ENCODE measurements at regions of chr5 and their contacts with region 1.

Region 1: DNA sequence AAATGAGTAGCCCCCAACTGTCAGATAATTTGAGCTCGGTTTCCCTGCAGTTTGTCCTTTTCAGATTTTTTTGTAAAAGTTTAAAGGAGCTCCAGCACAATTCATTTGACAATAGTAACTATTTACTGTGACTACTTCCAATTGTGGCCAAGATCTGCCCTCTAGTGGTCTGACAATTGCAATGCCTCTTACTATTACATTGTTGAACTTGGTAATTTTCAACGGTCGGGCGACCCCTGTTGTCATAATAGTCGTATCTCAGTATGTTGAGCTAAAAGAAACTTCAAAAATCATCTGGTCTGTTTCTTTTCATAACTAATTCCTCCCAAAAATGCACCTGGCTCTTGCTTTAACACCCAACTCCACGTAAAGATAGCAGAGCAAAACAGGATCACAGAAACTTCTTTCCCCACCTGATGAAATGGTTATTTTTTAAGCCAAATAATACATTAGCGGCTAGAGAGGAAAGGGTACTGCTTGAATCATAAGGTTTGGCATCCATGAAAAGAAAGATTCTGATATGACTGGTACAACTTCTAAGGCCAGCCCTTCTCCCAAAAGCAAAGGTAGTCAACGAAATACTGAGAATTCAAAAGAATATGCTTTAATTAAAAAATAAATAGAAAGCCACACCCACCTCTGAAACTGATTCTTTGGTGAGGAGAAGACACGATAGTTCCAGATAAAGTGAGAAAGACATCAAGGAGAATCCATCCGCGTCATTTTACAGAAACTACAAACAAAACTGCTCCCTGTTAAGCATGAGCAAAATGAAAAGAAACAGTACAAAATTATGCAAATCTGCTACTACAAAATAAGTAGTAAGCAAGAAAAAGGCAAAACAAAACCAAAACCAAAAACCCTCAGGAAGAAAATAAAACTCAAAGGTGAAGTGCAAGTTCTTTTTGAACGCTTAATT is 76.9 kb upstream of the HTR4 start:
- DNase-seq: peak in 2 of 3 donors; percentile 32 to 90
- ATAC-seq: peak; percentile 96
- H3K4me3 ChIP-seq: no peak overlapping the region
- H3K4me1 ChIP-seq: no peaks in the 10 kb centered on the region
- CTCF ChIP-seq: peak; percentile 76

Region 2: GRCh38 chr5:148179234-148179824 is 551.9 kb before region 1 on chr5:
- intact Hi-C with region 1: loop called (anchors 5 kb)
- DNase-seq: peak in 1 of 3 donors; percentile 30
- ATAC-seq: peak; percentile 71
- H3K4me3 ChIP-seq: no peak overlapping the region
- H3K4me1 ChIP-seq: no peaks in the 10 kb centered on the region
- CTCF ChIP-seq: no peak

Region 3: DNA sequence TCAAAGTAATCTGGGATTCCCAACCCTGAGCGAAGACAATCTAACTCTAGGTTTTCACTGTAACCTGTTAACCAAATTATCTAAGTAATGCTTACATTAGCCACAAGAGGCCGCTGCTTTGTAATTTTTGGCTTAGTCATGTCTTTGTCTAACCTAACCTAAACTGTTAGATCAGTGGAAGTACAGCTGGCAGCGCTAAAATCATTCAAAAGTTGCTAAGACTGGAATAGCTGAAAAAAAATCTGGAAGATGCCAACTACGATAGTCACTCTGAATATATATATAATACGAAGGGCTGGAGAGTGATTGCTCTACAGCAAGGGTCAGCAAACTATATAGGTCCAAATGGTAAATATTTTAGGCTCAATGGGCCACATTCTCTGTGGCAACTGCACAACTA is 287.2 kb before region 1 on chr5:
- intact Hi-C with region 1: loop called (anchors 2 to 5 kb)
- DNase-seq: peak in 1 of 3 donors; percentile 80
- ATAC-seq: peak; percentile 83
- H3K4me3 ChIP-seq: no peak overlapping the region
- H3K4me1 ChIP-seq: no peaks in the 10 kb centered on the region
- CTCF ChIP-seq: peak; percentile 9

Region 4: GRCh38 chr5:148998174-148998797 is 267.1 kb after region 1 on chr5:
- intact Hi-C with region 1: loop called in 1 of 2 experiments (anchors 10 kb)
- DNase-seq: peak in 1 of 3 donors; percentile 80
- ATAC-seq: peak; percentile 66
- H3K4me3 ChIP-seq: no peak overlapping the region
- H3K4me1 ChIP-seq: peaks cover 5% of the 10 kb centered on the region
- CTCF ChIP-seq: peak; percentile 45

Region 5: DNA sequence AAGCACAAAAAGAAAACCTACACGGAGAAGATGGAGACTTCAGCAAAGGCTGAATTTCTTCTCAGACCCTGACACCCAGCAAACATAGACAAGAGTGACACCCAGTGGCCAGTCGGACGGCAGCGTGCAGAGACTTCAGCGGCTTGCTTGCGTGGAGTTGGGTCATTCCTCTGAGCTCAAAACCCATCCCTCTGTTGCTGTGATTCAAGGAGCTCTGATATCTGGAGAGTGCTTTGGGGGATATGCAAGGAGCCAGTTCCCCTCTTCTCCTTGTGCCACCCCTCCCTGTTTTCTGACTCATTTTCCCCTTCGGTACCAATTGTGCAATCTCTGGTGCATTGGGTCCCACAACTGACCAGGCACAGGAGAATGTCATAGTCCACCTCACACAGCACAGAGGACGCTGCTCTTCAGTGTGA is 304.2 kb after region 1 on chr5:
- intact Hi-C with region 1: loop called (anchors 10 kb)
- DNase-seq: peak; percentile 62 to 85 (median 79)
- ATAC-seq: peak; percentile 87
- H3K4me3 ChIP-seq: no peak overlapping the region
- H3K4me1 ChIP-seq: no peaks in the 10 kb centered on the region
- CTCF ChIP-seq: peak; percentile 45

Region 6: DNA sequence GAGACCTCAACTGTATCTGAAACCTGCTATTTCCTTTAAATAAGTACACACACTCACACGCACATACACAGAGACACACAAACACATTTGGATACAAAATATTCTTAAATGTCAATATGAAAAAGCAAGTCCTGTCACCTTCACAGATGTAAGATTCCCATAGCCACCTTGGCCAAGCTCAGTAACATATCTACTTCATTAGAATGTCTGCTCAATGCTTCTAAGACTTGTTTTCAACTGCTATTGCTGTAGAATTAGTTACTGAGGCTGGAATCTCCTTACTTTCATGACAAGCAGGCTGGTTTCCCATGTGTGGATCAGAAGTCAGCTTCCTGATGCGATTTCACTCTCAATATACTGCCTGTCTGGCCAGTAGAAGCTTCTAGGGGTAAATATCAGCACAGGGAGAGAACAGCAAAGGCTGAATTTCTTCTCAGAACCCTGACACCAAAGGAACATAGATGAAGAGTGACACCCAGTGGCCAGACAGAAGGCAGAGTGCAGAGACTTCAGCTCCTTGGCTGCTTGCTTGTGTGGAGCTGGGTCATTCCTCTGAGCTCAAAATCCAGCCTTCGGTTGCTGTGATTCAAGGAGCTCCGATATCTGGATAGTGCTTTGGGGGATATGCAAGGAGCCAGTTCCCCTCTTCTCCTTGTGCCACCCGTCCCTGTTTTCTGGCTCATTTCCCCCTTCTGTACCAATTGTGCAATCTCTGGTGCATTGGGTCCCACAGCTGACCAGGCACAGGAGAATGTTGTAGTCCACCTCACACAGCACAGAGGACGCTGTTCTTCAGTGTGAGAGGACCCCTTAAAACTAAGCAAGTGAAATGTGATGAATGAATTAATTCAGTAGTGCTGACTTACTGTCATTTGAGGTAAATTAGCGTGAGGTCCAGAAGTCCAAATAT is 383.5 kb after region 1 on chr5:
- intact Hi-C with region 1: loop called in 1 of 2 experiments (anchors 5 kb)
- DNase-seq: peak in 2 of 3 donors; percentile 34 to 78
- ATAC-seq: peak; percentile 92
- H3K4me3 ChIP-seq: no peak overlapping the region
- H3K4me1 ChIP-seq: no peaks in the 10 kb centered on the region
- CTCF ChIP-seq: peak; percentile 27

Region 7: DNA sequence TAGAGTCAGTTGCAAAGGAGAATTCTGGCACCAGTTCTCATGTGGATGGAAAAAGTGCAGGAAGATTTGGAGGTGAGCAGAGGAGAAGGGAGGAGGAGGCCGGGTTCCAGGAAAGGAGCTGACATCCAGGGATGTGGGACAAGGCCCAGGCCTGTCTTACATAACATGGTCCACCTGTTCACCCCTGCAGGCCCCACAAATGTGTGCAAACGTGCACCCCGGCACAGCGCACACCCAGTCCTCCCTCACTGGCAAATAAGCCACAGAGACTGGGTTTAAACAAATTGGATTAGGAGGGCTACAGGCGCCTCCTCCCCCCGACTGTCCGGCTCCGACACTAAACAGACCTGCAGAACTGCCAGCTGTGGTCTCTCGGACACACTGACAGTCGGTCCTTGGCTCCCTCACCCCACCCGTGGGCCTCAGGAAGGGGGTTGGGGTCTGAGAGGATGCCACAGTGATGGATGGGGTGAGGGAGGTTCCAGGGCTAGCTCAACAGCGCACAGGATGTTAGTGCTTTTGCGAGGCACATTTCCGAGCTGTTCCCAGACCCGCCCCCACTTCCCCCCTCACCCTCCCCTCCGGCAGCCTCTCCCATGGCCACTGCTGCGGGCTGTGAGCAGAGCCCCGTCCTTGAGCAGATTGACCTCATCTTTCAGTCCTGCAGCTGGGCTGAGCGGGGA is 691.3 kb after region 1 on chr5:
- intact Hi-C with region 1: no loop called
- DNase-seq: peak in 2 of 3 donors; percentile 44 to 63
- ATAC-seq: peak; percentile 55
- H3K4me3 ChIP-seq: no peak overlapping the region
- H3K4me1 ChIP-seq: no peaks in the 10 kb centered on the region
- CTCF ChIP-seq: no peak